PC-9 (cell line): ENCODE measurements at regions of chr9 and their contacts with region 1.

Region 1: GRCh38 chr9:109477258-109478050 is 20.7 kb downstream of the PTPN3 start:
- DNase-seq: peak; percentile 83 to 99
- H3K4me3 ChIP-seq: peak overlapping the region; percentile 38; the same call in 1 of the 2 replicates
- H3K27ac ChIP-seq: peak overlapping the region; percentile 99
- H3K4me1 ChIP-seq: peaks cover 84% of the 10 kb centered on the region
- H3K27me3 ChIP-seq: no peaks in the 10 kb centered on the region
- CTCF ChIP-seq: no peak

Region 2: DNA sequence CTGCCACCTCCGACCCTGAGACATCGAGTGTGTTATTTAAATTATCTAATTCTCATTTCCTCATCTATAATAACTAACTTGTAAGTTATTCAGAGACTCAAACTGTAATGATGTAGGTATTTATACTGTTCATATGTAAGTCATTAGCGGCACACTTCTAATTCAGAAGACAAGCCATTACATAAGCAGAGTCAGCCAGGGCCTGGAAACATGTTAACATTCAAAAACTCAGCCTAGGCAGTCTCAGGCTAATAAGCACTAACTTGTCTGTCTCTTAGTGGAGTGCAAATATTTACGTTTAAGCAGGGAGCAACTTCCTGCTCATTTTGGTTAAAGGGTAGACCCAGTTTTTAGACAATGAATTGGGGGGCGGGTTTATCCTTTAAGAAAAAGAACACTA is 1220.1 kb before region 1 on chr9:
- CTCF ChIA-PET with region 1: no interaction called
- POLR2A ChIA-PET with region 1: no interaction called
- intact Hi-C with region 1: no loop called
- DNase-seq: no peak
- H3K4me3 ChIP-seq: no peak overlapping the region
- H3K27ac ChIP-seq: no peak overlapping the region
- H3K4me1 ChIP-seq: no peaks in the 10 kb centered on the region
- H3K27me3 ChIP-seq: no peaks in the 10 kb centered on the region
- CTCF ChIP-seq: no peak

Region 3: DNA sequence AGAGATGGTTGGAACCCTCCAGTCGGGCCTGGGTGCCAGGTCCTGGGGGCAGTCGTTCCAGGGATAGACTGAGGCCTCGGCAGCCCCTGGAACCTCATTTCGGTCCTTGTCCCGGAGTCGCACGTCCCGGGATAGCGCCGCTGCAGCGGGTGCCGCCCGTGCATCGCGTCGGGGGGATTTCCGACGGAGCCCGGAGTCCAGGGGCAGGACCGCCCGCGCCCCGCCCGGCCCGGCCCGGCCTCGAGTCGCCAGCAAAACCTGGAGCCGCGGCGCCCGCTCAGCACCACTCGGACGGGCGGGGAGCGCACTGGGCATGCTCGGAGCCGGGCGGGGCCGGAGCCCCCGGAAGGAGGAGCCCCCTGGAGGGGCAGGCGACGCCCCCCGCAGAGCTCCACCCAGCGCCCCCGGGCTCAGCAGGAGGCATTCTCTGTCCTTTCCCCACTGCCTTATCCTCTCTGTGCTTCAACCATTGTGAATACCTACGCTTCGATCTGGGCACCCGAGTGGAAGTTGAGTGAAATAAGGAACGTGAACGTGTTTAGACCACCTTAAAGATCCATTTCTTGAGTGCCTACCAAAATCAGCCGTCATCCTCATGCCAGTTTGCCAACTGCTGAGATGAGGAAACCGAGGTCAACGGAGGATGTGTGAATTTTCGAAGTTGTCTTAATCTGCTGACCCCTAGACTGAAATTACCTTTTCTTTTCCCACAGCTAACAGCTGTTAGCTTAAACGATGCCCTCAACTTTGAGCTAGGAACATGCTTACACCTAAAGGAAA is 22.4 kb after region 1 on chr9:
- CTCF ChIA-PET with region 1: no interaction called
- POLR2A ChIA-PET with region 1: no interaction called
- intact Hi-C with region 1: loop called (anchors 1 kb)
- DNase-seq: peak in 1 of 2 experiments; percentile 82
- H3K4me3 ChIP-seq: peak overlapping the region; percentile 62; the same call in 1 of the 2 replicates
- H3K27ac ChIP-seq: 0 out of 2 replicates have a peak overlapping the region, but pooled peaks have one; percentile 5
- H3K4me1 ChIP-seq: peaks cover 25% of the 10 kb centered on the region
- H3K27me3 ChIP-seq: no peaks in the 10 kb centered on the region
- CTCF ChIP-seq: no peak

Region 4: DNA sequence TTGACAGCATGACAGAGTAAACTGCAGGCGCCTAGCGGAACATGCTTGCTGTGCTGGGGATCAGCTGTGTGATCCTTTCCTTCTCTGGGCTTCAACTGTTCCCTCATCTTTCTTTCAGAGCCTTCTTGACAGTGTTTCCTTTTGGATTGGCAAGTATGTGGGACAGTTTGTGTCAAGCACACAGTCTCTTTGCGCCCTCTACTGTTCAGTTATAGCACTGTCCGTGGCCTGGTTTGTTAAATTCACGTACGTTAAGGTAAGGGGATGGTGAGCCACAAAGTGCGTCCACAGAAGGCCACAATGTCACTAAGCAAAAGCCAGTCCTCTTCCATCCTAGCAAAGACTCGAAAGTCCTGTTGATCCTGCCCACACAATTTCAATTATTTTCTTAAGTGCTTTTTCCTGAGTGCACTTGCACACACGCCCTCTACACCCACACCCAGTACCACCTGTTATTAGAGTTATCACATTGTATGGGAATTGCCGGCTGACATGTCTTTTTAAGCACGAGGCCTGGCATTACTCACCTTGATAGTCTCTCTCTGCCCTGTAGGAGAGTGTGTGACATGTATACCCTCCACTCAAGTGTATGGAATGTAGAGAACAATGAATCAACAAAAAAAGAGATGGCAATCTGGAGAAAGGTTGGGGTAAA is 43.2 kb after region 1 on chr9:
- CTCF ChIA-PET with region 1: no interaction called
- POLR2A ChIA-PET with region 1: no interaction called
- intact Hi-C with region 1: loop called (anchors 1 kb)
- DNase-seq: peak; percentile 71 to 91
- H3K4me3 ChIP-seq: no peak overlapping the region
- H3K27ac ChIP-seq: peak overlapping the region; percentile 61
- H3K4me1 ChIP-seq: peaks cover 46% of the 10 kb centered on the region
- H3K27me3 ChIP-seq: no peaks in the 10 kb centered on the region
- CTCF ChIP-seq: peak; percentile 95